ENCODE measurements at regions of chr16 and their contacts with region 1.

Region 1: DNA sequence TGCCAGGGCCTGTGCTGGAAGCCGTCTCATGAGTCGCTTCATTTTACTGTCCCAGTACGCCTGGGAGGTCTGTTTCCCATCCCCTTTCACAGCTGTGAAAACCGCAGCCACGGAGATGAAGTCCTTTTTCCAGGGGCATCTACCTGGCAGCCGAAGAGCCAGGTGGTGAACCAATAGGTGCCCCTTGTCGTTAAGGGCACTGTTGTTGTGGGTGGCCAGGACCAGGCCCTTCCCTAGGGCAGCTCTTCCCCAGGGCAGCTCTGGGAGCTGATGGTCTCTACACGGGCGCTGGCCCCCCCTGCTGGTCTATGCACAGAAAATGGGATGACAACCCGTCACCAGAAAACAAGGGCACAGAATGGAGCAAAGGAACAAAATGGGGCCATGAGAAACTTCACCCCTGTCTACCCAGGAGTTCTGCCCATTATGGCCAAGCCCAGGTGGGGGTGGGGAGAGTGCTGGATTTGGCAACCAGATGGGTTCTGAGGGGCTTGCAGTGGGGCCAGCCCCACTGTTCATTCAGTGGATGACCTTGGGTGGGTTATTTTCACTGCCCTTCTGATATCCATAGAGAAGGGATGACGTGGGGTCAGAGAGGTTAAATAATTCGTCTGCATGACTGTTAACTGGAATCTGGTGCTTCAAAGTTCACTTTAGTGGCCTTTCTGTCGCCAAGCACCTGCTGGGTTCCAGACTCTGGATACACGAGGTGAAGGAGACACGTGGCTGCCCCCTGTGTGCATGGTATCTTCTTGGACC is 11.5 kb downstream of the RMI2 start:
- DNase-seq: peak; percentile 90
- ATAC-seq: peak; percentile 89
- H3K4me3 ChIP-seq: no peak overlapping the region
- H3K27ac ChIP-seq: no peak overlapping the region
- H3K4me1 ChIP-seq: peaks cover 33% of the 10 kb centered on the region
- H3K27me3 ChIP-seq: peaks cover 4% of the 10 kb centered on the region
- CTCF ChIP-seq: peak; percentile 66

Region 2: GRCh38 chr16:10964039-10964890 is 392.5 kb before region 1 on chr16:
- intact Hi-C with region 1: loop called (anchors 10 kb)
- DNase-seq: peak; percentile 91
- ATAC-seq: peak; percentile 96
- H3K4me3 ChIP-seq: no peak overlapping the region
- H3K27ac ChIP-seq: no peak overlapping the region
- H3K4me1 ChIP-seq: peaks cover 4% of the 10 kb centered on the region
- H3K27me3 ChIP-seq: no peaks in the 10 kb centered on the region
- CTCF ChIP-seq: peak; percentile 96

Measured in upper lobe of right lung (tissue), 1 donor.